ENCODE measurements at regions of chr14 and their contacts with region 1.

Region 1: DNA sequence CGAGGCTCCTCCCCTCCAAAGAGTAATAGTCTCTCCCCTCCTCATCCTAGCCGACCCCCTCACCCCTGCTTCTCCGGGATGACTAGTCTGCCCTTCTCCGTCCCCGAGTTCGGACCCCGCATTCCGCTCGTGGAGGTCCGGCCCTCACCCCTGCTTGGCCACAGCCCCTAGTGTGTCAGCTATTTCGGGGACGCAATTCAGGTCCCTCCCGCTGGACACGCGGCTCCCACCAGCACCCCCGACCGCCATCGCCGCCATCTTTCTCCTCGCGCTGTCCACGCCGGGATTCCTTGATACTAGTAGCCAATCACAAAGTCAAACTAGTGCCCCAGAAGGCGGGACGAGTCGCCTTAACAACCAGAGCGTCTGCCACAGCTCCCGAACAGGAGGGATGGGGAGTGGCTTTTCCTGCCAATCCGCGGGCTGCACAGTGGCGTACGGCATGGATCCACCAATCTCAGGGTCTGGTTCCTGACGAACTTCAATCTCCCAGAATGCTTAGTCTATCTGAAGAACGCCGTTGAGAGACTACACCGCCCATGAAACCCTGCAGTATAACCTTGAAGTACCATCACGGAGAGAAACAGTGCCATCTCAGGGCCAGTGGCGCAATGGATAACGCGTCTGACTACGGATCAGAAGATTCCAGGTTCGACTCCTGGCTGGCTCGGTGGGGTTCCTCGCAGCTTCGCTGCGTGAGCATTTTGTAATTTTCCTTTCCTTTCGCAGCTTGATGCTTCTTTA is at the start of gene PRMT5:
- DNase-seq: peak; percentile 97
- ATAC-seq: peak; percentile 96
- H3K4me3 Mint-ChIP-seq: no peak within 1 kb of the TSS
- H3K27ac Mint-ChIP-seq: no peak within 1 kb of the TSS; the same call in 1 of the 2 replicates
- H3K4me1 Mint-ChIP-seq: peaks cover 7% of the 10 kb centered on the region
- H3K27me3 Mint-ChIP-seq: no peaks in the 10 kb centered on the region
- CTCF ChIP-seq: no peak
- total RNA-seq, gene PRMT5: 119 to 124 TPM (median 123 TPM) in 3 replicates

Region 2: GRCh38 chr14:22918804-22919600 is 10.3 kb before region 1 on chr14 and contains the start of gene RBM23:
- CTCF ChIA-PET with region 1: interaction called, 19 read pairs
- POLR2A ChIA-PET with region 1: interaction called, 14 read pairs
- DNase-seq: peak; percentile 100
- ATAC-seq: peak; percentile 98
- H3K4me3 Mint-ChIP-seq: peak within 1 kb of the TSS; percentile 92
- H3K27ac Mint-ChIP-seq: peak within 1 kb of the TSS; percentile 100
- H3K4me1 Mint-ChIP-seq: peaks cover 17% of the 10 kb centered on the region
- H3K27me3 Mint-ChIP-seq: peaks cover 2% of the 10 kb centered on the region; the same call in 1 of the 2 replicates
- CTCF ChIP-seq: no peak
- total RNA-seq, gene RBM23: 42.4 to 49.4 TPM (median 47.4 TPM) in 3 replicates

Region 3: GRCh38 chr14:22955702-22956569 is 26.7 kb after region 1 on chr14:
- CTCF ChIA-PET with region 1: interaction called, 26 read pairs
- POLR2A ChIA-PET with region 1: interaction called, 10 read pairs
- DNase-seq: no peak
- ATAC-seq: no peak
- H3K4me3 Mint-ChIP-seq: peak overlapping the region; percentile 91
- H3K27ac Mint-ChIP-seq: peak overlapping the region; percentile 94
- H3K4me1 Mint-ChIP-seq: peaks cover 20% of the 10 kb centered on the region
- H3K27me3 Mint-ChIP-seq: no peaks in the 10 kb centered on the region
- CTCF ChIP-seq: no peak

Region 4: DNA sequence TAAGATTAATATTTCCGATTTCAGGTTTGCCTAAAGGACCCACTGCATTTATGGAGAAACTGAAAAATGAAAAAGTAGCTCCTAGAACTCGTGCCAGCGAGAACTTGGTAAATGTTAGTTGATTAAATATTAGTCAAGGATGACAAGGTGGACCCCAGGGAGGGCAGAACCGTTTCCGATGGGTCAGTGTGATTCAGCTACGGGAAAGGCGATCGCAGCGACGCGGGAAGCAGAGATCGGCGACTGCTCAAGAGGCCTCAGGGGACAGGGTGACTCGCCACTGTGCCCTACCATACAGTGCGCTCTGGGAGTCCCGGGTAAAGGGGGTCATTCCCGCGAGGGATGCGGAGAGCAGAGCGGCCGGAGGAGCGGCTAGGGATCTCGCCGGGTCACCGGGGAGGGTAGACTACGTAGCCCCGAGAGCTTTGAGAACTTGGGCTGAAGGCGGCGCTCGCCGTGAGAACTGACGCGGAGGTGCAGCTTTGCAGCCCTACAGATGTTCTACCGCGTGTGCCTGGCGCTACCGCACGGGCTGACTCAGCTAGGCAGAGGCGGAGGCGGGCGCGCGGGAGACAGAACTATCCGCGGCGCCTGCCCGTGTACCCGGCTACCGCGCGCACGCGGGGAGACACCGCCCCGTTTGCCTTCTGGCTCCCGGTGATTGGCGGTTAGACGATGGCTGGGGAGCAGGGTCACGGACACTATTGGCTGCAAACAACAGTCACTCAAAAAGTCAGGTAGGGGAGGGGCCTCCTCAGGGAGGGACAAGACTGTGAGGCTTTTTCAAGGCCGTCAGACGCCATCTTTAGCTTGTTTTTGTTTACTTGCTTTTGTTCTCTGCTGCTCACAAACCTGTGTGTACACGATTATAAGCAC is 77.5 kb after region 1 on chr14:
- CTCF ChIA-PET with region 1: interaction called, 14 read pairs
- POLR2A ChIA-PET with region 1: interaction called, 8 read pairs
- DNase-seq: peak; percentile 96
- ATAC-seq: peak; percentile 97
- H3K4me3 Mint-ChIP-seq: peak overlapping the region; percentile 91
- H3K27ac Mint-ChIP-seq: peak overlapping the region; percentile 100
- H3K4me1 Mint-ChIP-seq: peaks cover 31% of the 10 kb centered on the region
- H3K27me3 Mint-ChIP-seq: no peaks in the 10 kb centered on the region
- CTCF ChIP-seq: no peak